Activated CD4-positive, alpha-beta memory T cell treated with anti-CD3 and anti-CD28 coated beads for 36 hours (primary cell): ENCODE measurements at regions of chr3 and their contacts with region 1.

Region 1: DNA sequence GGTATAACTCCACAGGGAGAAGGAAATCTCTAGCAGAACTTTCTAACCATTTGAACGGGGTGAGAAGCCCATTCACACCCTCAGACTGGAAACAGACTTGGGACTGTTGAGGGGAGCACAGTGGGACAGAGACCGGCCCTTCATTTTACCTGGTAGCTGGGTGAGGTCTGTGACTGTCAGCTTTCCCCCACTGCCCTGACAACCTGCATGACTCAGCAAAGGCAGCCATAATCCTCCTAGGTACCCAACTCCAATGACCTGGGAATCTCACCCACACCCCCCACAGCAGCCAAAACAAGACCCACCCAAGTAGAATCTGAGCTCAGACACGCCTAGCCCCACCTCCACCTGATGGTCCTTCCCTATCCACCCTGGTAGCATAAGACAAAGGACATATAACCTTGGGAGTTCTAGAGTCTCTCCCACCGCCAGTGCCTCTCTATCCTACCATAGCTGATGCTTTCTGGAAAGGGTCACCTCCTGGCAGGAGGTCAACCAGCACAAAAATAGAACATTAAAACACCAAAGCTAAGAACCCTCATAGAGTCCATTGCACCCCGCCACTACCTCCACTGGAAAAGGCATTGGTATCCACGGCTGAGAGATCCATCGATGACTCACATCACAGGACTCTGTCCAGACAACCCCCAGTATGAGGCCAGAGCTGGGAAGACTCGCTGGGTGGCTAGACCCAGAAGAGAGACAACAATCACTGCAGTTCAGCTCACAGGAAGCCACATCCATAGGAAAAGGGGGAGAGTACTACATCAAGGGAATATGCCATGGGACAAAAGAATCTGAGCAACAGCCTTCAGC is 28.0 kb downstream of the SENP7 start:
- DNase-seq: no peak
- H3K4me3 Mint-ChIP-seq: no peak overlapping the region
- H3K27ac Mint-ChIP-seq: peak overlapping the region; percentile 4
- H3K4me1 Mint-ChIP-seq: peaks cover 58% of the 10 kb centered on the region
- H3K27me3 Mint-ChIP-seq: no peaks in the 10 kb centered on the region

Region 2: GRCh38 chr3:101458387-101458786 is 26.6 kb before region 1 on chr3:
- CTCF ChIA-PET with region 1: no interaction called
- POLR2A ChIA-PET with region 1: no interaction called
- intact Hi-C with region 1: loop called (anchors 5 kb)
- DNase-seq: no peak
- H3K4me3 Mint-ChIP-seq: no peak overlapping the region
- H3K27ac Mint-ChIP-seq: no peak overlapping the region
- H3K4me1 Mint-ChIP-seq: peaks cover 22% of the 10 kb centered on the region
- H3K27me3 Mint-ChIP-seq: no peaks in the 10 kb centered on the region